ENCODE measurements at regions of chr5 and their contacts with region 1.

Region 1: DNA sequence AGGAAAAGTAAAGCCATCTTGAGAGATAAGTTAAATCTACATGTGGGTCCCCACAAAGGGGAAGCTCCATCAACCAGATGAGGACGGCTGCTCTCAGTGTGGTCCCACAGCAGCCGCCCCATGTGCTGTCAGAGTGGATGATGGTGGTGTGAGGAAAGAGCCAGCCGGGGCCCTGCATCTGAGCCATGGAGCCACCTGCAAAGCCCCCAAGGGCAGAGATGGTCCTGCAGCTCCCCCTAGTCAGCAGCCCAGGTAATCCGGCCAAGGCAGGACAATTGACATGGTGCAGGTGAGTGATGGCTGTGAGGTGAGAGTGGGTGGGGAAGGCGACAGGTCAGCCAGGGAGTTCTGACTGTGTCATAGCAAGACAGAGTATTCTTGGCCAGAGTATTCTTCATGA is 458.8 kb downstream of the ICE1 start:
- DNase-seq: peak; percentile 41 to 68
- H3K4me3 ChIP-seq: no peak overlapping the region
- H3K27ac ChIP-seq: no peak overlapping the region
- H3K4me1 ChIP-seq: no peaks in the 10 kb centered on the region
- H3K27me3 ChIP-seq: no peaks in the 10 kb centered on the region
- CTCF ChIP-seq: peak; percentile 84 to 94 (median 90)
- EP300 ChIP-seq: no peak
- POLR2A ChIP-seq: no peak
- RAD21 ChIP-seq: peak; percentile 98 to 100

Region 2: DNA sequence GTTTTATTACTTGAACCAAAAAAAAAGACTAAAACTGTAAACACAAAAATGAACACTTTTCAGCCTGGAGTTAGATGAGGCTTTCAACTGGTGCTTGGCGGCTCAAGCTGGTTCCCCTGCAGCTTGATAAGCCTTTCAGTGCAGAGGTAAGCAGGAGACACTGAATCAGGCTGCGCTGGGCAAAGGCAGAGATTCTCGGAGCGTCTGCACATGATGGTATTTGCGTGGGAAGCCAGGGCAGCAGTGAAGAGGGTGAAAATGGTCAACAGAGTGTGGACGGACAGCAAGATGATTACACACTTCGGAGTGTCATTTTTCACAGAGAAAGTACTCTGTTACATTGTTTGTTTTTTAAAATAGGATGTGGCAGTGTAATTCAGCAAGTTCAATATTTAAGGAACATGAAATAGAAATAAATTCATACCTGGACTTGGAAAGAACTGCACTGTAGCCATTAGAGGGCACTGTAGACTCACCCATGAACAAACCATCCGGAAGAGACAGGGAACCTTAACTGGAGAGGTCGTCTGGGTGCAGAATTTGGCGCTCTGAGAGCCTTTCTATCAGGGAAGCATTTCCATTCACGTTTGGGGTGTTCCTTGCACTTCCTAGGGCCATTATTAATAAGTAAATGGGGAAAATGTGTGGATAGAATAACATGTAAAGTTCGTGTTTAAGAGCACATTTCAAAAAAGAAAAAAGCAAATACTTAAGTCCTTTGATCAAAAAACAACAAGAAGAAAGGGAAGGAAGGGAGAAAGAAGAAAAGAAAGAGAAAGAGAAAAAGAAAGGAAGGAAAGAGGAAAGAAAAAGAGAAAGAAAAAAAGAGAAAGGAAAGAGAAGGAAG is 389.0 kb before region 1 on chr5:
- CTCF ChIA-PET with region 1: interaction called, 42 read pairs
- POLR2A ChIA-PET with region 1: no interaction called
- DNase-seq: no peak
- H3K4me3 ChIP-seq: no peak overlapping the region
- H3K27ac ChIP-seq: no peak overlapping the region
- H3K4me1 ChIP-seq: peaks cover 0 to 7% (median 2%) of the 10 kb centered on the region in 4 experiments; a peak in 4 of 7 replicates
- H3K27me3 ChIP-seq: peaks cover 0 to 7% (median 6%) of the 10 kb centered on the region in 4 experiments; a peak in 3 of 7 replicates
- CTCF ChIP-seq: peak; percentile 16 to 74 (median 69)
- EP300 ChIP-seq: no peak
- POLR2A ChIP-seq: no peak
- RAD21 ChIP-seq: peak; percentile 93 to 95